Activated CD4-positive, alpha-beta T cell treated with anti-CD3 and anti-CD28 coated beads, Interleukin-2, amount 10 ng/mL, durations not matched to agents 24 days and 14 days (primary cell): ENCODE measurements at regions of chr3 and their contacts with region 1.

Region 1: DNA sequence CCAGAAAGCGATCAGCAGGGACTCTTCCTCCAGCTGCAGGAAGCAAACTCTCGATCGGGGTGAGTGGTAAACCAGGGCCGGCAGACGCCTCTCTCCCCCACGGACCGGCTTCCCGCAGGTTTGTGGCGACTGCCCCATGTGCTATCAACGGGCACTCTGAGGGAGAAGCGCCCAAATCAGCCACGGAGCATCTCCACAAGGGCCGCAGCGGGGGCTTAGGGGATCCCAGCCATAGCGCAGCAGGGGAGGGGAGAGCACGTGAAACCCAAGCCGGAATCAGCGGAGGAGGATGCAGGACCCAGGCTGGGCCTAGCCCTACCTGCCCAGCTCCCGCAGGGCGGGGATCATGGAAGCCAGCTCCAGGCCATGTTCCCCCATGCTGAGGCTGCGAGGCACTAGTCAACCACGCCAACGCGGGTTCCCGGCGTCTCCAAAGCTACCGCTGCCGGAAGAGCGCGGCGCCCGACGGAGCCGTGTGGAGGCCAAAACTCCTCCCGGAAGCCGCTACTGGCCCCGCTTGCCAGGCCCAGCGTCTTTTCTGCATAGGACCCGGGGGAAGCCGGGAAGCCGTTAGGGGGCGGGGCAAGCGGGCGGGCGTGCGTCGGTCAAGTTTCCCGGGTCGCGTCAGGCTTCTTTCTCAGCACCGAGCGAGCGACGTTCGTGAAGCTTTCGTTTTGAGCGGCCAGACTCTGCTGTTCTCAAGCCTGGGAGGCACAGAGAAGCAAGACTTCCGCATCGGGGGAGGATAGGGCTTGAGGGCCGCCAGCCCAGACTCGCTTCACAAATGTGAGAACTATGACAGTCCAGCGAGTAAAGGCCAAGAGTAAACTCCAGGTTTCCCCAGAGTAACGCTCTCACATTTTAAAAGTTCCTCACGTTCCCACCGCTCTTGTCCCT is at the start of gene ATR:
- DNase-seq: peak; percentile 99
- H3K4me3 Mint-ChIP-seq: peak within 1 kb of the TSS; percentile 99
- H3K27ac Mint-ChIP-seq: peak within 1 kb of the TSS; percentile 99
- H3K4me1 Mint-ChIP-seq: peaks cover 42% of the 10 kb centered on the region
- H3K27me3 Mint-ChIP-seq: peaks cover 15% of the 10 kb centered on the region
- total RNA-seq, gene ATR: 34.2 and 35.0 TPM in 2 replicates

Region 2: GRCh38 chr3:142498397-142499180 is 80.0 kb before region 1 on chr3:
- intact Hi-C with region 1: no loop called
- DNase-seq: no peak
- H3K4me3 Mint-ChIP-seq: no peak overlapping the region
- H3K27ac Mint-ChIP-seq: peak overlapping the region; percentile 53
- H3K4me1 Mint-ChIP-seq: peaks cover 9% of the 10 kb centered on the region
- H3K27me3 Mint-ChIP-seq: no peaks in the 10 kb centered on the region

Region 3: DNA sequence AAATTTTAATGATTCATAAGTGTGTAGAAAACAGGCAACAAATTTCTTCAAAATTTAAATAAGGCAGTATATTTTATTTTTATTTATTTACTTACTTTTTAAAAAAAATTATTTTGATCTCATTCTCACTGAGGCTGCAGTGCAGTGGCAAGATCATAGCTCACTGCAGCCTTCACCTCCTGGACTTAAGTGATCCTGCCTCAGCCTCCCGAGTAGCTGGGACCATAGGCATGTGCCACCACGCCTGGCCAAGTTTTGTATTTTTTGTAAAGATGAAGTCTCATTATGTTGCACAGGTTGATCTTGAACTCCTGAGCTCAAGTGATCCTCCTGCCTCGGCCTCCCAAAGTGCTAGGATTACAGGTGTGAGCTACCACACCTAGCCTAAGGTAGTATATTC is 69.5 kb before region 1 on chr3:
- intact Hi-C with region 1: loop called (anchors 1 kb)
- DNase-seq: peak; percentile 65
- H3K4me3 Mint-ChIP-seq: peak overlapping the region; percentile 81
- H3K27ac Mint-ChIP-seq: peak overlapping the region; percentile 90
- H3K4me1 Mint-ChIP-seq: peaks cover 16% of the 10 kb centered on the region
- H3K27me3 Mint-ChIP-seq: no peaks in the 10 kb centered on the region

Region 4: GRCh38 chr3:142523921-142524566 is 54.5 kb before region 1 on chr3:
- intact Hi-C with region 1: no loop called
- DNase-seq: no peak
- H3K4me3 Mint-ChIP-seq: no peak overlapping the region
- H3K27ac Mint-ChIP-seq: no peak overlapping the region
- H3K4me1 Mint-ChIP-seq: no peaks in the 10 kb centered on the region
- H3K27me3 Mint-ChIP-seq: no peaks in the 10 kb centered on the region

Region 5: DNA sequence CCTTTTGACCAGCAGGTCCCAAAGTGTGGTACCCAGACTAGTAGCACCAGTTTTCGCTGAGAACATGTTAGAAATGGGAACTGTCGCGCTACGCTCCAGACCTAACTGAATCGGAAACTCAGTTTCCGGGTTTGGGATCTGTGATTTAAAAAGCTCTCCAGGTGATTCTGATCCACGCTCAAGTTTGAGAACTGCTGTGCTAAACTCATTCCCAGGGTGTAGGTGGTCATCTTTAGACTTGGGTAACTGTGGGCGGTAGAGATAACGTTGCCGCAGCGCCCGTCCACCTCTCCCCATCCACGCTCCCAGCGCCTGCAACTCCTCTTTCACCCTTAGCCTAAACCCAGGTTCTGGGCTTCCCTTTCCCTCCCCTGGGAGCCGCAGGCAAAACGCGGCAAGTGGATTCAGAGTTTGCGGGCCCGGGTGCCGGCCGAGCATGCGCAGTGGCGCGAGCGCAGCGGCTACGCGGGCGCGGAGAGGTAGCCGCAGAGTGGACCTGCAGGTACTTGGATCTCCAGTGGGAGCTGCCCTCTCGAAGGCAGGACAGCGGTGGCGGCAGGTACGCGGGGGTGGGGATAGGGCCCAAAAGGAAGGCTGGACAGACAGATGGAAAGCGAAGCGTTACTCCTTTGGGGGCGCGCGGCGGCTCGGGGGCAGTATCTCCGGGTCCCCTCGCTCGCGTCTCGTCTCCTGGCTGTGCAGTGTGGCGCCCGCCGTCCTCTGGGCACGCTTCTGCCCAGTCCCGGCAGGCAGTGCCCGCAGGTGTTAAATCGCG is 17.6 kb after region 1 on chr3 and contains the start of gene PLS1:
- intact Hi-C with region 1: loop called (anchors 1 kb)
- DNase-seq: peak; percentile 98
- H3K4me3 Mint-ChIP-seq: peak within 1 kb of the TSS; percentile 99
- H3K27ac Mint-ChIP-seq: peak within 1 kb of the TSS; percentile 87
- H3K4me1 Mint-ChIP-seq: peaks cover 15% of the 10 kb centered on the region
- H3K27me3 Mint-ChIP-seq: no peaks in the 10 kb centered on the region
- total RNA-seq, gene PLS1: 4.6 TPM in 2 replicates

Region 6: GRCh38 chr3:142694225-142694624 is 115.7 kb after region 1 on chr3:
- intact Hi-C with region 1: no loop called
- DNase-seq: no peak
- H3K4me3 Mint-ChIP-seq: no peak overlapping the region
- H3K27ac Mint-ChIP-seq: no peak overlapping the region
- H3K4me1 Mint-ChIP-seq: peaks cover 4% of the 10 kb centered on the region
- H3K27me3 Mint-ChIP-seq: no peaks in the 10 kb centered on the region

Region 7: GRCh38 chr3:143001369-143002082 is 423.0 kb after region 1 on chr3 and contains the start of gene U2SURP:
- intact Hi-C with region 1: loop called (anchors 1 kb)
- DNase-seq: peak; percentile 97
- H3K4me3 Mint-ChIP-seq: peak within 1 kb of the TSS; percentile 96
- H3K27ac Mint-ChIP-seq: peak within 1 kb of the TSS; percentile 97
- H3K4me1 Mint-ChIP-seq: peaks cover 24% of the 10 kb centered on the region
- H3K27me3 Mint-ChIP-seq: peaks cover 8% of the 10 kb centered on the region
- total RNA-seq, gene U2SURP: 189 and 212 TPM in 2 replicates